ENCODE measurements at regions of chr4 and their contacts with region 1.

Region 1: DNA sequence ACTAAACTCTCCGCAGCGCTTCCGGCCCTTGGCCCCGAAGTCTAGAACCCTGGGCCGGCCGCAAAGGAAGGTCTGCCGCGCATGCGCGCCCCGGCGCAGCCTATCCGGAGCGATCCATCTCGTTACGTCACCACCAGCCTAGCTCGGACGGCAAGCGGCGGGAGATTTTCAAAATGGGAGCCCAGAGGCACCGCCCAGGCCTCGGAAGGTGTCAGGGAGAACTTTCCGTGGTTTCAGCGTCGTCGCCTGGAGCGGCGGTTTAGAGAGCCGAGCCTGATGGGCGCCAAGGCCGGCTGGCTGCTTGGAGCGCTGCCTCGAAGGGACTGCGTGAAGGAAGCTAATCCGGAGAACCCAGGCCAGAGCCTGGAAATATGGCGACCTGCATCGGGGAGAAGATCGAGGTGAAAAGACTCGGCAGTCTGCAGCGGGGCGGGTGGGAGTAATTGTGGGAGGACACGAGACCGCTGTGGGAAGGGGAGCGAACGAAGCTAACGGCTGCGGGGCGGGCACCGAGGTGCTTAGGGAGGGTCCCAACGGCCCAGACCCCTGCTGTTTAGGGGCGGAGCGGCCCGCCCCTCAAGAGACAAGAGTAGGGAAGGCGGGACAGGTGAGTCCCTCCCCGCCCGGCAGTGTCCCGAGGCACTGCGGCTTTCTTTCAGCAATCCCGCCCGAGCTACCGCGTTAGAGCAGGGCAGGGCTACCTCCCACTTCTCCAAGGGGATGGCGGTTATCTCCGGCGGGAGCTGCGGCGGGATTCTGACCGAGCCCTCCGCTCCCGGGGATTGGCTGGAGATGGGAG is at the start of gene PLK4:
- DNase-seq: peak; percentile 96
- H3K4me3 ChIP-seq: peak within 1 kb of the TSS; percentile 92 to 96 (median 94)
- H3K27ac ChIP-seq: peak within 1 kb of the TSS; percentile 100
- H3K4me1 ChIP-seq: no peaks in the 10 kb centered on the region; a peak in 1 of 7 replicates
- H3K27me3 ChIP-seq: no peaks in the 10 kb centered on the region
- CTCF ChIP-seq: no peak
- EP300 ChIP-seq: no peak
- POLR2A ChIP-seq: peak; percentile 92 to 95
- RAD21 ChIP-seq: no peak
- total RNA-seq, gene PLK4: 35.2 and 38.7 TPM in 2 replicates

Region 2: GRCh38 chr4:127852661-127853060 is 28.3 kb before region 1 on chr4:
- CTCF ChIA-PET with region 1: interaction called, 5 read pairs
- POLR2A ChIA-PET with region 1: interaction called, 10 read pairs
- DNase-seq: no peak
- H3K4me3 ChIP-seq: no peak overlapping the region
- H3K27ac ChIP-seq: peak overlapping the region; percentile 49; the same call in 1 of the 2 replicates
- H3K4me1 ChIP-seq: peaks cover 2 to 16% (median 9%) of the 10 kb centered on the region in 4 experiments; a peak in 6 of 7 replicates
- H3K27me3 ChIP-seq: no peaks in the 10 kb centered on the region
- CTCF ChIP-seq: no peak
- EP300 ChIP-seq: no peak
- POLR2A ChIP-seq: no peak
- RAD21 ChIP-seq: no peak

Region 3: DNA sequence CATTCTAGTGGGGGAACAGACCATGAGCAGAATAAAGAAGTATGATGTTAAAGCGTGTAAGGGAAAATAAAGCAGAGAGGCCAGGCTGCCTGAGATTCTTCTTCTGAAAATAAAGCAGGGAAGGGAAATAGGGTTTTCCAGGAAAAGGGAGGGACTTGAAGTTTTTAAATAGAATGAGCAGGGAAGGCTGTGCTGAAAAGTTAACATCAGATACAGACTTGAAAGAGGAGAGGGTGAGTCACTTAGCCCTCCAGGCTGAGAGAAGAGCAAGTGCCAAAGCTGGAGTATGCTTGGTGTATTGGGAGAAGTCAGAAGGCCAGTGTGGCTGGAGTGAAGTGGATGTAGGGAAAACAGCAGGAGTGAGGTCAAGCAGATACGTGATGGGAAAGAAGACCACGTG is 10.3 kb before region 1 on chr4:
- CTCF ChIA-PET with region 1: no interaction called
- POLR2A ChIA-PET with region 1: interaction called, 13 read pairs
- DNase-seq: no peak
- H3K4me3 ChIP-seq: no peak overlapping the region
- H3K27ac ChIP-seq: no peak overlapping the region
- H3K4me1 ChIP-seq: no peaks in the 10 kb centered on the region
- H3K27me3 ChIP-seq: no peaks in the 10 kb centered on the region
- CTCF ChIP-seq: no peak
- EP300 ChIP-seq: no peak
- POLR2A ChIP-seq: no peak
- RAD21 ChIP-seq: no peak

Region 4: DNA sequence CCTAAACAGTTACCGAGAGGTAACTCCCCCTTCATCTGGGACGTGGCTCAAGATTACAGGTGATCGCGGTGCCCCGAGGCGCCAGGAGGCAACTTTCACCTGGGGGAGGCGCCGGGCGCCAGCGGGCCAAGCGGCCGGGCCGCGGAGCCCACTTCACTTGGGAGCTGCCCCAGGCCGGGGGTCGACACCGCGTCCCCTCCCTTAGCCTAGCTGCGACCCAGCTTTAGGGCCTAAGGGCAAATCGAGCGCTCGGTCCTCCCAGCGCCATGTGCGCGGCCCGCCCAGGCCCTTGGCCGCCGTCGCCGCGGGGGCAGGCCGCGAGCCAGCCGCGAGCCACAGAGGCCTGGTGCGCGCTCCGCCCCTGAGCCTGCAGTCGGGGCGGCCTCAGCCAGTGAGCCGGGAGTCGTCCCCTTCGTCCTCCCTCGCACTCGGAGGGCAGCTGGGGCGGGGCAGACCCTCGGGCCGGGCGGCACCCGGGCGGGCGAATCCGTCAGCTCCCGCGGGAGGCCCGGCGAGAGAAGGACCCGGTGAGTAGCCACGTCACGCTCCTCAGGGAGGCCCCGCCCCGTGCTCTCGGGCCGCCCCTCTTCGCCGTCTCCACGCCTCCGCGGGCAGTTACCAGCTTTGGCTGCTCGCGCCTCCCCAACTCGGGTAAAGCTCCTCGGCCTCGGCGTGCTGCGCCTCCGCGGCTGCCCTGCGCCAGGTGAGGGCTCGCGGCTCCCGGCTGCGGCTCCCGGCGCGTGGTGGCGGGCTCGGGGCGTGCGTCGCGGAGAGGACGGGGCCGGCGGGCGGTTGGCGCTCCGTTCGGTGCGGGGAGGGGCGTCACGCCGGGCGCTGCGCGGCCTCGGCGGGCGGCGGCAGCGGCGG is 180.0 kb after region 1 on chr4 and contains the start of gene LARP1B:
- CTCF ChIA-PET with region 1: interaction called, 3 read pairs
- POLR2A ChIA-PET with region 1: interaction called, 10 read pairs
- DNase-seq: peak; percentile 85 to 96
- H3K4me3 ChIP-seq: peak within 1 kb of the TSS; percentile 59 to 81 (median 76)
- H3K27ac ChIP-seq: peak within 1 kb of the TSS; percentile 96
- H3K4me1 ChIP-seq: peaks cover 0 to 8% (median 0%) of the 10 kb centered on the region in 4 experiments; a peak in 3 of 7 replicates
- H3K27me3 ChIP-seq: no peaks in the 10 kb centered on the region
- CTCF ChIP-seq: no peak
- EP300 ChIP-seq: no peak
- POLR2A ChIP-seq: peak; percentile 89 to 96
- RAD21 ChIP-seq: no peak
- total RNA-seq, gene LARP1B: 44.8 and 47.0 TPM in 2 replicates

Measured in H1 (cell line).